Endothelial cell of umbilical vein (primary cell): ENCODE measurements at regions of chr5 and their contacts with region 1.

Region 1: DNA sequence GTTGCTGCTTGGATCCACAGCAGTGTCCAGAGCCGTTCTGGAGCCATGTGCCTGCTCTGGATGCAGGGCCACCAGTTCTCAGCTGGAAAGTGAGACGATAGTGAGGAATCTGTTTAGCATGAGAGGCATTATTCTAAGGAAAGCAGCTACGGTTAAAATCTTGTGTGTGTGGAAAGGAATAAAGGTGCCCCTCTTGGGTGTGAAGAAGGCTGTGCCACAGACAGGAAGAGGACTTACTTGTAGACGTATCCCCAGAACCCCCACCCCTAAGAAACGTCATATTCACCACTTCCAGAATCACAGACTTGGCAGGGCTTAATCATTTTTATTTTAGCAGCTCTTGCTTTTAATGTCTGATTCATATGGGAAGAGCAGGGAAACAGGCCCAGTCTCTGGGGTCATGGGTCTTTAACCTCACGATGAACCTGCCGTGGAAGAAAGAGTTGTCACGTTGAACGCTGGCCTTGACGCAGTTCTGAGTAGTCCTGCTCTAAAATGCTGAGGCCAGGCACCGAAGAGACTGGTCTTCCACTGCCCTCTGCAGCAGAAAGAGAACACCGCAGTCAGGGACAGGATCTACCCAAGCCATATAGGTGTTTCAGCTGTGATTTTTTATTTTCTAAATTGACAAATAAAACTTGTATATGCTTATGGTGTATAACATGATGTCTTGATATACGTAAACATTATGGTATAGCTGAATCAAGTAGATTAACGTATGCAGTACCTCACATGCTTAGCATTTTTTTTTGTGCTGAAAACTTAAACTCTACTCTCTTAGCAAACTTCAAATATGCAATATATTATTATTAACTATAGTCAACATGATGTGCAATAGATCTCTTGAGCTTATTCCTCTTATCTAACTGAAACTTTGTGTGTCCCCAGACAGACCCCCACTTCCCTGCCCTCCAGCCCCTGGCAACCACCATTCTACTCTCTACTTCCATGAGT is 38.8 kb downstream of the CARTPT start:
- DNase-seq: peak; percentile 85
- H3K4me3 ChIP-seq: no peak overlapping the region
- H3K27ac ChIP-seq: no peak overlapping the region
- H3K4me1 ChIP-seq: peaks cover 4% of the 10 kb centered on the region
- H3K27me3 ChIP-seq: peaks cover 2 to 5% of the 10 kb centered on the region in 2 experiments
- CTCF ChIP-seq: peak; percentile 81 to 84
- POLR2A ChIP-seq: no peak

Region 2: GRCh38 chr5:71455427-71456361 is 302.2 kb before region 1 on chr5 and contains the start of gene BDP1:
- CTCF ChIA-PET with region 1: interaction called, 10 read pairs
- POLR2A ChIA-PET with region 1: no interaction called
- dilution Hi-C with region 1: no loop called
- intact Hi-C with region 1: no loop called
- DNase-seq: peak; percentile 95
- H3K4me3 ChIP-seq: peak within 1 kb of the TSS; percentile 89 to 99 (median 97)
- H3K27ac ChIP-seq: peak within 1 kb of the TSS; percentile 74
- H3K4me1 ChIP-seq: peaks cover 14% of the 10 kb centered on the region
- H3K27me3 ChIP-seq: peaks cover under 1 to 6% of the 10 kb centered on the region in 2 experiments
- CTCF ChIP-seq: peak in 1 of 2 donors; percentile 27
- POLR2A ChIP-seq: peak; percentile 63
- total RNA-seq, gene BDP1: 25.2 and 27.5 TPM in 2 replicates

Region 3: DNA sequence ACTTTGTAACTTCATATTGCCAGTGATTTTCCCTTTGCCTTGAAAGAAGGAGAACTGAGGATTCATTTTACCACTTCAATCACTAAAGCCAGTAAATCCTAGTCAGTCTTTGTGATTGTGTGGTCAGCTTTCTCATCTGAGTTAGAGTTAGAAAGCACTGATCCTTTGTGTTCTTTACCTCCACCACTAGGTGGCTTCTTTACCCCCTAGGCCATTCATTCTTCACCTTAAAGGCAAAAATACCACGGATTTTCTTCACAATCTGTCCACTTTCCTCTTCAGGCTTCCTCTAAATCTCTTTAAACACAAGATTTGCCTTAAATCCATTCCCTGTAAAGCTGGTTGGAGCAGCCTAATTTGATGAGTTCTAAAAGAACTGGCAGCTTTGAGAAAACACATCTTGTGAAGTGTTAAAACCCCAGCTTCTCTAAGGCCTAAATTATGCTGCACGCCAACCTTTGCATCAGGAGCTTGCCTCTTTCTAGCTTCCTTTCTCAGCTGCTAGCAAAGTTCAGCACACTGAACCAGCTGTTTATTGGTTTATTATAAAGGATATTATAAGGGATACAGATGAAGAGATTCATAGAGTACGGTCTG is 282.0 kb before region 1 on chr5:
- CTCF ChIA-PET with region 1: interaction called, 88 read pairs
- POLR2A ChIA-PET with region 1: interaction called, 4 read pairs
- dilution Hi-C with region 1: no loop called
- intact Hi-C with region 1: loop called (anchors 1 kb)
- DNase-seq: peak; percentile 39
- H3K4me3 ChIP-seq: no peak overlapping the region
- H3K27ac ChIP-seq: no peak overlapping the region
- H3K4me1 ChIP-seq: peaks cover 6% of the 10 kb centered on the region
- H3K27me3 ChIP-seq: no peaks in the 10 kb centered on the region
- CTCF ChIP-seq: peak; percentile 65 to 72
- POLR2A ChIP-seq: no peak

Region 4: GRCh38 chr5:71522151-71522550 is 235.7 kb before region 1 on chr5:
- CTCF ChIA-PET with region 1: interaction called, 3 read pairs
- POLR2A ChIA-PET with region 1: no interaction called
- dilution Hi-C with region 1: no loop called
- intact Hi-C with region 1: loop called (anchors 10 kb)
- DNase-seq: no peak
- H3K4me3 ChIP-seq: no peak overlapping the region
- H3K27ac ChIP-seq: no peak overlapping the region
- H3K4me1 ChIP-seq: no peaks in the 10 kb centered on the region
- H3K27me3 ChIP-seq: no peaks in the 10 kb centered on the region
- CTCF ChIP-seq: no peak
- POLR2A ChIP-seq: no peak

Region 5: DNA sequence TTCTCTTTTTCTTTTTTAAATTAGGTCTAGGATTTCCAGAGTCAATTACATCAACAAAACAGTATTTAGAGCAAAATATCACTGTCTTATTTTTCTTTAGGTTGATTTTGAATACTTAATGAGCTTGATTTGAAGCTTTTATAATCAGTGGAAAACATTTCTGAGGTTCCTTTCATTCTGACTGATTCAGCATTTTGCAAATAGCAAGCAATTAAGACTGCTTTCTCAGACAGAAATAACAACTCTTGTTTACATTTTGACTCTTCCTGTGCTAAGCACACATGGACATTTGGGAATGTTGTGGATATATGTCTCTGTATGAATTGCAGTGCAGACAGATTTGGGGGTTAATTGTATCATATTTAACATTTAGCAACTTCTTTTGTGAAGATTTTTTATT is 193.0 kb before region 1 on chr5:
- CTCF ChIA-PET with region 1: interaction called, 4 read pairs
- POLR2A ChIA-PET with region 1: no interaction called
- dilution Hi-C with region 1: no loop called
- intact Hi-C with region 1: loop called (anchors 5 kb)
- DNase-seq: no peak
- H3K4me3 ChIP-seq: no peak overlapping the region
- H3K27ac ChIP-seq: no peak overlapping the region
- H3K4me1 ChIP-seq: no peaks in the 10 kb centered on the region
- H3K27me3 ChIP-seq: no peaks in the 10 kb centered on the region
- CTCF ChIP-seq: no peak
- POLR2A ChIP-seq: no peak

Region 6: DNA sequence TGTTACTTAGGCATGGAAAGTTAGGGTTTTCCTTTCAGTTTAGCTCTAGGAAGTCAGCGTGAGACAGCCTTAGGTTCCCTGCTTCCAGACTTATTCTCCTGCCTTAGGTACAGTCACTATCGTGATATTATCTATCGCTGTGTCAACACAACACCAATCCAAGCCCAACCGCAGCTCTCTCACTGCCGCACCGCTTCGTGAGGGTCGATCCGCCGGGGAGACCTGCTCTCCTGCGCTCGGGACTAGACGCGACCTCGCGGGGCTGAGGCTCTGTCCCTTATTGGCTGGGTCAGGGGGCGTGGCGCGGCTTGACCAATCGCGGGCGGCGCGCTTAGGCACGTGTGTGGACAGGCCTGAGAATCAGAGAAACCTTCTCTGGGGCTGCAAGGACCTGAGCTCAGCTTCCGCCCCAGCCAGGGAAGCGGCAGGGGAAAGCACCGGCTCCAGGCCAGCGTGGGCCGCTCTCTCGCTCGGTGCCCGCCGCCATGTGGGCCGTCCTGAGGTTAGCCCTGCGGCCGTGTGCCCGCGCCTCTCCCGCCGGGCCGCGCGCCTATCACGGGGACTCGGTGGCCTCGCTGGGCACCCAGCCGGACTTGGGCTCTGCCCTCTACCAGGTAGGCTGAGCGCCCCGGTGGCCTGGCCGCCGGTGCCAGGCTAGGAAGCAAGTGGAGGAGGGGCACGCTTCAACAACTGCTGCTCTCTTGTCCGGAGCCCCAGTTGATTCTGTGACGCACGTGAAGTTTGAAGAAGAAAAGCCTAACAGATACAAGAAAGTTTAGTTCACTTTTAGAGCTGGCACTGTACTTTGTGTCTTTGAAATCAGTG is 170.7 kb before region 1 on chr5 and contains the start of gene MCCC2:
- CTCF ChIA-PET with region 1: interaction called, 3 read pairs
- POLR2A ChIA-PET with region 1: no interaction called
- dilution Hi-C with region 1: no loop called
- intact Hi-C with region 1: loop called (anchors 5 kb)
- DNase-seq: peak; percentile 97
- H3K4me3 ChIP-seq: peak within 1 kb of the TSS; percentile 61 to 75 (median 63)
- H3K27ac ChIP-seq: peak within 1 kb of the TSS; percentile 46
- H3K4me1 ChIP-seq: peaks cover 3% of the 10 kb centered on the region
- H3K27me3 ChIP-seq: no peaks in the 10 kb centered on the region
- CTCF ChIP-seq: no peak
- POLR2A ChIP-seq: peak; percentile 61
- total RNA-seq, gene MCCC2: 27.8 and 28.6 TPM in 2 replicates

Region 7: GRCh38 chr5:71658916-71659662 is 98.8 kb before region 1 on chr5:
- CTCF ChIA-PET with region 1: interaction called, 17 read pairs
- POLR2A ChIA-PET with region 1: no interaction called
- dilution Hi-C with region 1: no loop called
- intact Hi-C with region 1: loop called (anchors 1 kb)
- DNase-seq: peak; percentile 41
- H3K4me3 ChIP-seq: no peak overlapping the region
- H3K27ac ChIP-seq: no peak overlapping the region
- H3K4me1 ChIP-seq: no peaks in the 10 kb centered on the region
- H3K27me3 ChIP-seq: peaks cover 2% of the 10 kb centered on the region in 2 experiments
- CTCF ChIP-seq: no peak
- POLR2A ChIP-seq: no peak

Region 8: GRCh38 chr5:71734141-71734540 is 23.7 kb before region 1 on chr5:
- CTCF ChIA-PET with region 1: no interaction called
- POLR2A ChIA-PET with region 1: no interaction called
- dilution Hi-C with region 1: no loop called
- intact Hi-C with region 1: no loop called
- DNase-seq: peak; percentile 39
- H3K4me3 ChIP-seq: no peak overlapping the region
- H3K27ac ChIP-seq: no peak overlapping the region
- H3K4me1 ChIP-seq: no peaks in the 10 kb centered on the region
- H3K27me3 ChIP-seq: peaks cover 15 to 39% of the 10 kb centered on the region in 2 experiments
- CTCF ChIP-seq: no peak
- POLR2A ChIP-seq: no peak

Region 9: GRCh38 chr5:71816307-71816706 is 58.4 kb after region 1 on chr5:
- CTCF ChIA-PET with region 1: no interaction called
- POLR2A ChIA-PET with region 1: no interaction called
- dilution Hi-C with region 1: no loop called
- intact Hi-C with region 1: no loop called
- DNase-seq: no peak
- H3K4me3 ChIP-seq: no peak overlapping the region
- H3K27ac ChIP-seq: no peak overlapping the region
- H3K4me1 ChIP-seq: no peaks in the 10 kb centered on the region
- H3K27me3 ChIP-seq: peaks cover 6 to 10% of the 10 kb centered on the region in 2 experiments
- CTCF ChIP-seq: no peak
- POLR2A ChIP-seq: no peak